ENCODE measurements at regions of chr12 and their contacts with region 1.

Region 1: DNA sequence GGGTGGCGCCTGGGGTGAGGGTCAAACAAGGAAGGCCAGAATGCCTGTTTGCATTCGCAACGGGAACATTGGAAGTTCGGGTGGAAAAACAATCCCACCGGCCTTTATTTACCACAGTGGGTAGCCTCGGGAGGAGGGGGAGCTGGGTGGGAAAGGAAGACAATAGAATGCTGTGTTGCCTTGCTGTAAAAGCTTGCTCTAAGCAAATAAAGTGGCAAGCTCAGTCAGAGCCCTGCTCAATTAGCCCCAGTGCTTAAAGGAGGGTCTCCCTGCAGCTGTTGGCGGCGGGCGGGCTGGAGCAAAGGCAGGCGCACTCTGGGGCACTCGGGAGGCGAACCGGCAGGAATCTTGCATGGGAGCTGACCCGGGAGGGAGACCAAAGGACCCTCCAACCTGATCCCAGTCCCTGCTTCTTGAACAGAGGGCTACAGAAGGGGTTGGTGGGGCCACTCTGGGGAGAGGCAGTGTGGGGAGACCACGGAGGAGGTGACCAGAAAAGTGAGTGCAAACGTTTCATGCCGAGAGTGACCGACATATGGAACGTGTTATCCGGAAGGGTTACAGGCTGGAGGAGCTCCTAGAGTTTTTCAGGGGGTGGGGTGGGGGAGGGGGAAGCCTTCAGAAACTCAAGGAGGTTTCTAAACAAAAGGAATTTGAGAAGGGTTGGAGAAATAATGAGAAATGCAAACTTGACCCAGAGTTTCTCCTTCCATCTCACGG is 48.5 kb downstream of the NTF3 start:
- DNase-seq: peak; percentile 59
- ATAC-seq: peak; percentile 67
- H3K4me3 ChIP-seq: no peak overlapping the region
- H3K27ac ChIP-seq: peak overlapping the region; percentile 97
- H3K4me1 ChIP-seq: peaks cover 30% of the 10 kb centered on the region
- H3K27me3 ChIP-seq: no peaks in the 10 kb centered on the region
- CTCF ChIP-seq: no peak
- POLR2A ChIP-seq: no peak
- RAD21 ChIP-seq: no peak

Region 2: DNA sequence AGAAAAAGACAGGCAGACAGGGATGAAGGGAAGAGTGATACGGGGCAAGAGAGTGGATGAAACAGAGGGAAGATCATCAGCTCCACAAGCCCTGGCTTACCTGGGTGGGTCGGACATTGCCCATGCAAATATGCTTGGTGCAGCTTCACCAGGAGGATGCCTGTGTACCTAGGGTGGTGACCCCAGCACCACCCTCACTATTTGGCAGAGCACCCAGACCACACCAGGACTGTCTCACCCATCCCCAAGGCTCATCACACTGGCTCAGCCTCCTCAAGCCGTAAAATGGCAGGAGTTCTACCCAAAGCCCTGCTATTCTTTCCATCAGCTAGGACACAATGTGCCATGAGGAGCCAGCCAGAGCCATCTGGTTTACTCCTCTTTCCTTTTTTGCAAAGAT is 757.2 kb before region 1 on chr12:
- CTCF ChIA-PET with region 1: no interaction called
- POLR2A ChIA-PET with region 1: no interaction called
- dilution Hi-C with region 1: no loop called
- in situ Hi-C with region 1: no loop called
- intact Hi-C with region 1: no loop called
- DNase-seq: no peak
- ATAC-seq: no peak
- H3K4me3 ChIP-seq: no peak overlapping the region
- H3K27ac ChIP-seq: no peak overlapping the region
- H3K4me1 ChIP-seq: no peaks in the 10 kb centered on the region
- H3K27me3 ChIP-seq: peaks cover 10% of the 10 kb centered on the region
- CTCF ChIP-seq: no peak
- POLR2A ChIP-seq: no peak
- RAD21 ChIP-seq: no peak

Region 3: DNA sequence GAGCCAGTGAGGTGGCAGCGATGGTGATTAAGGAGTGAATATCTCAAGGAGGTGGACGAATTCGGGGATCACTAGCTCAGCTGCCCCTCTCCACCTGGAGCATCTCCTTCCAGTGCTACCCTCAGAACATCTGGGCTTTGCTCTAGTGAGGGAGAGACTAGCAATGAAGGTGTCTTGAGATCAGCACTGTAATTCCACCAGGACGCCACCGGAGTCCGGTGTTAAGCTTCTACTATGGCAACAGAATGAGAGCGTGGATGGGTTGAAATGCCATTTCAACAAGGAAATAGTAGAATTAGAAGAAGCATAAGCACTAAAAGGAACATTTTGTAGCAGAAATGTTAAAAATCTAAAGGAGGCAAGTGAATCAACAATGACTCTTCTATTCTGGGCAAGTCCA is 12.6 kb after region 1 on chr12:
- CTCF ChIA-PET with region 1: no interaction called
- POLR2A ChIA-PET with region 1: interaction called, 12 read pairs
- dilution Hi-C with region 1: no loop called
- in situ Hi-C with region 1: no loop called
- intact Hi-C with region 1: no loop called
- DNase-seq: no peak
- ATAC-seq: no peak
- H3K4me3 ChIP-seq: no peak overlapping the region
- H3K27ac ChIP-seq: no peak overlapping the region; the same call in 1 of the 2 replicates
- H3K4me1 ChIP-seq: peaks cover 39% of the 10 kb centered on the region
- H3K27me3 ChIP-seq: no peaks in the 10 kb centered on the region
- CTCF ChIP-seq: peak; percentile 29
- POLR2A ChIP-seq: no peak
- RAD21 ChIP-seq: peak; percentile 30; the same call in 1 of the 2 replicates

Region 4: GRCh38 chr12:5499566-5500330 is 19.4 kb after region 1 on chr12:
- CTCF ChIA-PET with region 1: no interaction called
- POLR2A ChIA-PET with region 1: interaction called, 23 read pairs
- dilution Hi-C with region 1: no loop called
- in situ Hi-C with region 1: no loop called
- intact Hi-C with region 1: no loop called
- DNase-seq: peak; percentile 97
- ATAC-seq: peak; percentile 92
- H3K4me3 ChIP-seq: no peak overlapping the region
- H3K27ac ChIP-seq: peak overlapping the region; percentile 95
- H3K4me1 ChIP-seq: peaks cover 39% of the 10 kb centered on the region
- H3K27me3 ChIP-seq: no peaks in the 10 kb centered on the region
- CTCF ChIP-seq: no peak
- POLR2A ChIP-seq: no peak
- RAD21 ChIP-seq: no peak

Region 5: GRCh38 chr12:5511644-5512600 is 31.5 kb after region 1 on chr12:
- CTCF ChIA-PET with region 1: no interaction called
- POLR2A ChIA-PET with region 1: no interaction called
- dilution Hi-C with region 1: no loop called
- in situ Hi-C with region 1: no loop called
- intact Hi-C with region 1: no loop called
- DNase-seq: peak; percentile 44
- ATAC-seq: peak; percentile 79
- H3K4me3 ChIP-seq: no peak overlapping the region
- H3K27ac ChIP-seq: no peak overlapping the region
- H3K4me1 ChIP-seq: peaks cover 5% of the 10 kb centered on the region
- H3K27me3 ChIP-seq: no peaks in the 10 kb centered on the region
- CTCF ChIP-seq: peak; percentile 72
- POLR2A ChIP-seq: no peak
- RAD21 ChIP-seq: peak; percentile 79

Measured in IMR-90 (cell line).